Mammary epithelial cell (primary cell): ENCODE measurements at regions of chr1 and their contacts with region 1.

Region 1: GRCh38 chr1:94936861-94937620 is 10.1 kb upstream of the CNN3 start:
- DNase-seq: no peak
- H3K4me3 ChIP-seq: no peak overlapping the region
- H3K27ac ChIP-seq: no peak overlapping the region
- H3K4me1 ChIP-seq: no peaks in the 10 kb centered on the region
- H3K27me3 ChIP-seq: no peaks in the 10 kb centered on the region
- CTCF ChIP-seq: no peak

Region 2: GRCh38 chr1:94920051-94920450 is 17.0 kb before region 1 on chr1:
- CTCF ChIA-PET with region 1: no interaction called
- dilution Hi-C with region 1: no loop called
- in situ Hi-C with region 1: no loop called
- intact Hi-C with region 1: no loop called
- DNase-seq: no peak
- H3K4me3 ChIP-seq: no peak overlapping the region
- H3K27ac ChIP-seq: no peak overlapping the region
- H3K4me1 ChIP-seq: peaks cover 37% of the 10 kb centered on the region
- H3K27me3 ChIP-seq: no peaks in the 10 kb centered on the region
- CTCF ChIP-seq: no peak

Region 3: DNA sequence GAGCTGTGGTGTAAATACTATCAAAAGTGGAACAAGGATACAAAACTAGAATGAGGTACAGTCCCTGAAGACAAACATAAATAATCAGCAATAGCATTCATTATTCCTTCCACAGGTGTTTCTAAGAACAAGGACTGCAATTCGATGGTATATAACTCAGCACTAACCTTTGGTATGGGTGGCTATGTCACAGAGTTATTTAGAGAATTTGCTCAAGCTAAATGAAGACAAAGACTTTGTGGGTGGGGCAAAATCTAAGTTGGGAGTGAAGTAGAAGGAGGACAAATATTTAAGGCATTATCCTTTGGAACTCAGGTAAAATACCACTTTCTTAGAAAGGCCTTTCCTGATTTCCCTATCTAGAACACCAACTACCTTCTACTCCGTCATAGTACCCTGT is 41.4 kb after region 1 on chr1:
- CTCF ChIA-PET with region 1: interaction called, 10 read pairs
- dilution Hi-C with region 1: no loop called
- in situ Hi-C with region 1: no loop called
- intact Hi-C with region 1: no loop called
- DNase-seq: no peak
- H3K4me3 ChIP-seq: no peak overlapping the region
- H3K27ac ChIP-seq: no peak overlapping the region
- H3K4me1 ChIP-seq: peaks cover 29% of the 10 kb centered on the region
- H3K27me3 ChIP-seq: no peaks in the 10 kb centered on the region
- CTCF ChIP-seq: no peak